ENCODE measurements at regions of chr2 and their contacts with region 1.

Region 1: DNA sequence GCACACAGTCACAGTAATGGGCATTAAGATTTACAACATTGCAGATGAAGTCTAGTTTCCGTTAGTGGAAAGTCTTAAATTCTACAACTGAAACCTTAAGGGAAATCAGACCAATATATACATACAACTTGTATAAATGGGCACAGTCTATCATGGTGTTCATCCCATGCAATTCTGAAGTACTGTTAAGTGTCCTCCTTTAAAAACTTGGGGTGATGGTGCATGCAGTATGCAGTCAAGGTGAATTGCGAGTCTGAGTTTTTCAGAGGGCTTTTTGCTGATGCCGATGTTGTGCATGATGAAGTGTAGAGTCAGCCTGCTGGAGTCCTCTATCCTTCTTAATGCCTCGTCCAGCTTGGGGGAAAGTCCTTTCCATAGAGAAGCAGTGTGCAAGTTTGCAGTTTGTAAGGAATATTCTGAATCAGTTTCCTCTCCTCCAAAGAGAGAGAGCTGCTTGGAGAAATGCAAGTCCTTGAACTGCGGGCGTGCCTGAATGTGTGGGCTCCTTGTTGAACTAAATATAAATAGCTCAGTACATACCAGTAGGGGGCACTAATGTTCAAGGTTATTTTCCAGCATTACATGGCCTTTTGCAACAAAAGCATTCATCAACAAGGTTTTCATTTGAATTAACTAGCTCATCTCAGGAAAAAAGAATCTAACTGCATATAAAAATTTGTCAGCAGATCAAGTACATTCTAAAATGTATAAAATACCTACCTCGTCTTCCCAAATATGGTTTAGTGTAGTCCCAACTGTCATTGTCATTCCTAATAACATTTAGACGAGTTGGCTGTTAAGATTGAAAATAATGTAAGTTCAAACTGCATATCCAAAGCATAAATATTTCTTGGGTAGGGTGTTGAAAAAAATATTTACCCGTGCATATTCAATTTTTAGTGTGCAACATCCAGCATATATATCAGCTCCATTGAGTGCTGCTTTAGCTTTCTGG is 21.3 kb downstream of the HNRNPLL start:
- DNase-seq: no peak
- H3K4me3 ChIP-seq: no peak overlapping the region
- CTCF ChIP-seq: peak in 1 of 3 donors; percentile 56
- POLR2A ChIP-seq: no peak

Region 2: DNA sequence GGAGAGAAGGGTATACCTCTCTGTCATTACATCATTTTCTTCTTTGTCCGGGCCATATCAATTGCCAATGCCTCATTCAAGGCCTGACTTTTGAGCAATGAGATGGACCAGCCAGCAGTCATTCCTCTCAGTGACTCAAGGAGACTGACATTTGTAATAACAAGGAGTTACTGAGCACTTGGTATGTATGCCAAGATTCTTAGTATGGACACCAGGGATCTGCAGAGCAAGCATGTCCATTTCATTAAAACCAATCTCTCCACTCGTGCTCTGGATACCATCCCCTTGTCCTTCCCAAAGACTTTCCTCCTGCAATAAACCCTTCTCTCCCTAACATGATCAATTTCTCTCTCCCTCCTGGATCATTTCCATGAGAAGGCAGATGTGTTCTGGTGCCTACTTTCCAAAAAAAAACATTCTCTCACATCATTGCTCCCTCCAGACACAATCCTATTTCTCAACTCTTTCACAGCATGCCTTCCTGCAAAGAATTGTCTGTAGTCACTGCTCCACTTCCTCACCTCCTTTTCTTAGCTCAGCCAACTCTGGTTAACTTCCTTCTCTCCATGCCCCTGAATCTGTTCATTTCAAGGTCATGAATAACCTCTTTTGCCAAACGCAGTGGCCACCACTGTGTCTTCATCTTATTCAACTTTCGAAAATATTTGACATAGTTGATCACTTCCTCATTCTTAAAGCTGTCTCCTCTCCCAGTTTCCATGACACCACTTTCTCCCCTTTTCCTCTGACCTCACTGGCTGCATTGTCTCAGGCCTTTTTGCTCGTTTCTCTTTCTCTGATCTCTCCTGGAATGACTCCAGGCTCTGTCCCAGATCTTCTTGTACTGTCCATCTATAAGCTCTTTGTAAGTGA is 402.7 kb before region 1 on chr2:
- intact Hi-C with region 1: no loop called
- DNase-seq: peak in 1 of 2 donors; percentile 35
- H3K4me3 ChIP-seq: no peak overlapping the region
- CTCF ChIP-seq: no peak
- POLR2A ChIP-seq: no peak

Region 3: GRCh38 chr2:38454081-38454480 is 127.4 kb before region 1 on chr2:
- intact Hi-C with region 1: no loop called
- DNase-seq: no peak
- H3K4me3 ChIP-seq: no peak overlapping the region
- CTCF ChIP-seq: no peak
- POLR2A ChIP-seq: no peak

Region 4: GRCh38 chr2:38740851-38741731 is 159.6 kb after region 1 on chr2:
- intact Hi-C with region 1: loop called (anchors 5 kb)
- DNase-seq: peak in 1 of 2 donors; percentile 46
- H3K4me3 ChIP-seq: no peak overlapping the region
- CTCF ChIP-seq: peak in 1 of 3 donors; percentile 49
- POLR2A ChIP-seq: no peak